HCT116 (cell line): ENCODE measurements at regions of chr15 and their contacts with region 1.

Region 1: GRCh38 chr15:75367913-75368688 is at the start of gene MAN2C1:
- DNase-seq: peak; percentile 97
- ATAC-seq: peak; percentile 94
- H3K4me3 ChIP-seq: peak within 1 kb of the TSS; percentile 68 to 84
- H3K27ac ChIP-seq: peak within 1 kb of the TSS; percentile 95
- H3K4me1 ChIP-seq: peaks cover 11 to 23% of the 10 kb centered on the region in 2 experiments
- H3K27me3 ChIP-seq: no peaks in the 10 kb centered on the region
- CTCF ChIP-seq: peak; percentile 77 to 95 (median 88)
- POLR2A ChIP-seq: peak; percentile 92
- RAD21 ChIP-seq: peak; percentile 89
- total RNA-seq, gene MAN2C1: 118 TPM

Region 2: GRCh38 chr15:75625542-75626347 is 257.6 kb after region 1 on chr15 and contains the start of gene SNUPN:
- CTCF ChIA-PET with region 1: interaction called, 10 read pairs
- POLR2A ChIA-PET with region 1: interaction called, 12 read pairs
- RAD21 ChIA-PET with region 1: no interaction called
- intact Hi-C with region 1: loop called (anchors 5 kb)
- DNase-seq: peak; percentile 90
- ATAC-seq: peak; percentile 83
- H3K4me3 ChIP-seq: peak within 1 kb of the TSS; percentile 91 to 99
- H3K27ac ChIP-seq: peak within 1 kb of the TSS; percentile 99
- H3K4me1 ChIP-seq: peaks cover 16 to 40% of the 10 kb centered on the region in 2 experiments
- H3K27me3 ChIP-seq: no peaks in the 10 kb centered on the region
- CTCF ChIP-seq: no peak
- POLR2A ChIP-seq: peak; percentile 87
- RAD21 ChIP-seq: no peak
- total RNA-seq, gene SNUPN: 29.8 TPM

Region 3: DNA sequence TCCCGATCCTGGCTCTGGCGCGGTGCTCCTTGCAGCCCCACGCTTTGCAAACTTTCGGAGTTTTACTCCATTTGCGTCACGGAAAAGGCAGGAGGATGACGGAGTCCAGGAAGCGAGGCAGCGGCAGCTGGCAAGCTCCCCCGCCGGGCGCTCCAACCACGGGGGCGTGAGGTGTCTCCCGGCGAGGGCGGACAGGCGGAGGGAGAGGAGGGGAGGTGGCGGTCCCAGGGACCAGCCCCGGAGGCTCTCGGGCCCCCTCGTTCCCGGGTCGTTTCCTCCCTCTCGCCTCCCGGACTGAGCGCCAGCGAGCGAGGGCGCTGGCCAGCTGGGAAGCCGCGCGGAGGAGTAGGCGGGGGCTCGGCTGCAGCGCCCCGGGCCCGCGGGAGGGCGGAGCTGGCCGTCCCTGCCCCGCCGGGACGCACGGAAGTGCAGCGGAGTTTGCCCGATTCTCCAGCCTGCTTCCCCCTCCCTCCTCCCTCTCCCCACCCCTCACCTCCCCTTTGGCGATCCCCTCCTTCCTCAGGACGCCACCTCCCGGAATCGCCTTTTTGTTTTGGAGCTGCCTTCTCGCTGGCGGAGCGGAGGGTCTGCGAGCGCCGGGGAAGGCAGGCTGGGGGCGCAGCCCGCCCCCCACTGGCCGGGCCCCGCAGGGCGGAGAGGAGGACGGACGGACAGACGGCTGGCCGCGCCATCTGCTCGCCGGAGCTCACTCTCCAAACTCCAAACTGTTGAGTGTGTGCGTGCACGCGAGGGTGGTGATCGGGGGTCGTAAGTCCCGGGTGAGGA is 279.5 kb after region 1 on chr15 and contains the start of gene SNX33:
- CTCF ChIA-PET with region 1: interaction called, 4 read pairs
- POLR2A ChIA-PET with region 1: interaction called, 10 read pairs
- RAD21 ChIA-PET with region 1: interaction called in 1 of 2 experiments, 4 read pairs
- intact Hi-C with region 1: no loop called
- DNase-seq: no peak
- ATAC-seq: peak; percentile 84
- H3K4me3 ChIP-seq: peak within 1 kb of the TSS; percentile 83 to 98
- H3K27ac ChIP-seq: peak within 1 kb of the TSS; percentile 76
- H3K4me1 ChIP-seq: peaks cover 22 to 58% of the 10 kb centered on the region in 2 experiments
- H3K27me3 ChIP-seq: no peaks in the 10 kb centered on the region
- CTCF ChIP-seq: peak in 2 of 3 experiments; percentile 56 to 62; a peak in 4 of 6 replicates
- POLR2A ChIP-seq: peak; percentile 43
- RAD21 ChIP-seq: no peak
- total RNA-seq, gene SNX33: 8.3 TPM

Region 4: GRCh38 chr15:75684642-75685041 is 316.5 kb after region 1 on chr15:
- CTCF ChIA-PET with region 1: interaction called, 9 read pairs
- POLR2A ChIA-PET with region 1: no interaction called
- RAD21 ChIA-PET with region 1: interaction called in 1 of 2 experiments, 3 read pairs
- intact Hi-C with region 1: loop called (anchors 1 kb)
- DNase-seq: no peak
- ATAC-seq: no peak
- H3K4me3 ChIP-seq: no peak overlapping the region
- H3K27ac ChIP-seq: no peak overlapping the region
- H3K4me1 ChIP-seq: no peaks in the 10 kb centered on the region; a peak in 1 of 4 replicates
- H3K27me3 ChIP-seq: no peaks in the 10 kb centered on the region
- CTCF ChIP-seq: no peak
- POLR2A ChIP-seq: no peak
- RAD21 ChIP-seq: peak; percentile 20; the same call in 1 of the 2 replicates